Endothelial cell of umbilical vein (primary cell): ENCODE measurements at regions of chr11 and their contacts with region 1.

Region 1: GRCh38 chr11:27385245-27385644 is 22.2 kb upstream of the CCDC34 start:
- DNase-seq: peak; percentile 14
- H3K4me3 ChIP-seq: no peak overlapping the region
- H3K27ac ChIP-seq: no peak overlapping the region
- H3K4me1 ChIP-seq: peaks cover 6% of the 10 kb centered on the region
- H3K27me3 ChIP-seq: no peaks in the 10 kb centered on the region
- CTCF ChIP-seq: no peak
- POLR2A ChIP-seq: no peak

Region 2: DNA sequence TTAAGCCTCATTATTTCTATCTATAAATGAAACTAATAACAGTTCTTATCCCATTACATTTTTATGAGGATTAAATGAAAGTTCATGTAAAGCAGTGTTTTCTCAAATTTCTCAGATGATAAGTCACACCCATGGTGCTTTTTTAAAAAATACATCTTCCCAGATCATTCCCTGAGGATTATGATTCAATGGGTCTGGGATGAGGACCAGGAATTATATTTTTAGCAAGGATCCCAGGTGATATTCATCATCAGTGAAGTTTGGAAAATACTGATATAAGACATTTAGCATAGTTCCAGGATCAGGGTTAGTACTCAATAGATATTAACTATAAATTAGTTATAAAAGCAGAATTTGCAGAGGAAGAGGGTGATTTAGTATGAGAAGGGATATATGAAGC is 255.6 kb before region 1 on chr11:
- CTCF ChIA-PET with region 1: no interaction called
- POLR2A ChIA-PET with region 1: no interaction called
- dilution Hi-C with region 1: no loop called
- intact Hi-C with region 1: no loop called
- DNase-seq: no peak
- H3K4me3 ChIP-seq: no peak overlapping the region
- H3K27ac ChIP-seq: no peak overlapping the region
- H3K4me1 ChIP-seq: no peaks in the 10 kb centered on the region
- H3K27me3 ChIP-seq: no peaks in the 10 kb centered on the region
- CTCF ChIP-seq: no peak
- POLR2A ChIP-seq: no peak

Region 3: GRCh38 chr11:27395556-27396260 is 10.5 kb after region 1 on chr11:
- CTCF ChIA-PET with region 1: interaction called, 10 read pairs
- POLR2A ChIA-PET with region 1: no interaction called
- dilution Hi-C with region 1: no loop called
- intact Hi-C with region 1: no loop called
- DNase-seq: no peak
- H3K4me3 ChIP-seq: no peak overlapping the region
- H3K27ac ChIP-seq: no peak overlapping the region
- H3K4me1 ChIP-seq: peaks cover 6% of the 10 kb centered on the region
- H3K27me3 ChIP-seq: no peaks in the 10 kb centered on the region
- CTCF ChIP-seq: no peak
- POLR2A ChIP-seq: no peak

Region 4: GRCh38 chr11:27456140-27456794 is 71.0 kb after region 1 on chr11:
- CTCF ChIA-PET with region 1: no interaction called
- POLR2A ChIA-PET with region 1: no interaction called
- dilution Hi-C with region 1: no loop called
- intact Hi-C with region 1: loop called (anchors 2 kb)
- DNase-seq: peak; percentile 68
- H3K4me3 ChIP-seq: peak overlapping the region in 1 of 3 experiments; percentile 31
- H3K27ac ChIP-seq: peak overlapping the region; percentile 8
- H3K4me1 ChIP-seq: peaks cover 14% of the 10 kb centered on the region
- H3K27me3 ChIP-seq: no peaks in the 10 kb centered on the region
- CTCF ChIP-seq: no peak
- POLR2A ChIP-seq: no peak